K562 (cell line): ENCODE measurements at regions of chr2 and their contacts with region 1.

Region 1: DNA sequence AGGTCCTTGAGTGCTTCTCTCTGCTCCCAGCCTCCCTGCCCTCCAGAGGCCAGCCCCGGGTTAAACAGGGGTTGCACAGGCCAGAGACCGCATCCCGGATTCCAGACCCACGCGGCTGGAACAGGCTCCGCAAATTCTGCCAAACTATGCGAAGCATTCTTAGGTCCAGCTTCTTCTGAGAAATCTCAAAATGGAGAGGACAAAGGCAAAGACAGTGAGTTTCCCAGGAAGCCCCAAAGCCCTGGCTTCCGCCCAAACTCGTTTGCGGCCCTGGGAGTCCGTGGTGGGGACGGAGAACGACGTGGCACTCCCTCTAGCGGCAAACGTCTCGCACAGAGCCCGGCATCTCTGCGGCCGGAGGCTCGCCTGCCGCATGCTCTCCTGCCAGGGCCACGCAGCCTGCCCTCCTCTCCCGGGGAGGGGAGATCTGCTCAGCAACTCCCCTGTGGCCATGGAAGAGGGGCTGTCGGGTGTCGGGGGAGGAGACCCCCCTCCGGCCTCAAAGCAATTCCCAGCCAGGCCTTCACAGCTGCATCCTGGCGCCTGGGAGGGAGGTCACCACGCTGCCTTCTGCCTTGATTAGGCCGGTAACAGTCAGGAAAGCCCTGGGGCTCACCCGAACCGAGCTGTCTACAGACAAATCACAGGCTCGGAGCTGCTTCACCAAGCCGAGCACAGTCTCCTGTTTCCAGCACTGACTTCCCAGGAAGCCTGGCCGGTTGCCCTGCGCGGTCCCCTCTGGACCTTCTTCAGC is 33.4 kb upstream of the KLHL29 start:
- DNase-seq: peak; percentile 66 to 83 (median 70)
- ATAC-seq: peak; percentile 99
- H3K4me3 ChIP-seq: no peak overlapping the region
- H3K27ac ChIP-seq: no peak overlapping the region
- H3K4me1 ChIP-seq: peaks cover 0 to 10% of the 10 kb centered on the region in 2 experiments; a peak in 2 of 5 replicates
- H3K27me3 ChIP-seq: peaks cover 2 to 58% of the 10 kb centered on the region in 2 experiments; a peak in 3 of 5 replicates
- CTCF ChIP-seq: peak; percentile 74 to 85 (median 81)
- EP300 ChIP-seq: no peak
- POLR2A ChIP-seq: no peak
- RAD21 ChIP-seq: peak; percentile 61 to 70

Region 2: DNA sequence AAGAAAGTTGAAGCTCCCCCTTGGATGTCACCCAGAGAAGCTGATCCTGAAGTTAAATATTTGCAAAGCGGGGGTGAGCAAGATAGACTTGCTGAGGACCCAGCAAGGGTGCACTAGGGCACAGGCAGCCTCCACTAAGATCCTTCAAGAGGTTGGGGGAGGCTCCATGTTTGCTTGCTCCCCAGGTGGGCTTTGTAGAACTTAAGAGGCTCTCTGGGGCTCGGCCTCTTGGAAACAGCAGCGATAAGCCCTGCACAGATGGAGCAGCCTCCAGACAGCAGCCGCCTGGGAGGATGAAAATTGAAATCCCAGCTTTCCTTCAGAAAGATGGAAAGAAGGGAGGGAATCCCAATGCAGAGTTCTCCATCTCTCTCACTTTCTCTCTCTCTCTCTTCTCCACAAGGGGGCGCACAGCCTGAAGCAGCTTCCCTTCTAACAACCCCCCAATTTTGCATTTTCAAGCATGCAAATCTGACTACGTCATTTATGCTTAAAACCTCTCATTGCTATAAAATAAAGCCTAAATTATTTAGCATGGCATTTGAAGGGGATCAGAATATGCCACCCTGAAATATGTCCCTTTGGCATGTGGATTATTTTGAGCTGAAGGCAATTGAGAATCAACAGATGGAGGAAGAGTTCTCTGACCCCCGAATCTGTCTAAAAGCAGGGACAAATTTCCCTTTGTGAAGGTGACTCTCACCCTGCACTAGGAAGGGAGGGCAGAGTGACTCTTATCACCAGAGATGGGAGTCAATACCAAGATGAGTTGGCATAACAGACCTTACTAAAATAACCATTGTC is 152.2 kb before region 1 on chr2:
- CTCF ChIA-PET with region 1: no interaction called
- POLR2A ChIA-PET with region 1: no interaction called
- in situ Hi-C with region 1: no loop called
- intact Hi-C with region 1: loop called (anchors 5 kb)
- DNase-seq: peak; percentile 42 to 56 (median 55)
- ATAC-seq: peak; percentile 81
- H3K4me3 ChIP-seq: no peak overlapping the region
- H3K27ac ChIP-seq: no peak overlapping the region
- H3K4me1 ChIP-seq: no peaks in the 10 kb centered on the region
- H3K27me3 ChIP-seq: no peaks in the 10 kb centered on the region
- CTCF ChIP-seq: peak; percentile 48 to 67 (median 65)
- EP300 ChIP-seq: no peak
- POLR2A ChIP-seq: no peak
- RAD21 ChIP-seq: peak in 1 of 2 experiments; percentile 55; a peak in 2 of 4 replicates

Region 3: GRCh38 chr2:23314687-23315086 is 36.9 kb before region 1 on chr2:
- CTCF ChIA-PET with region 1: no interaction called
- POLR2A ChIA-PET with region 1: no interaction called
- in situ Hi-C with region 1: no loop called
- intact Hi-C with region 1: no loop called
- DNase-seq: no peak
- ATAC-seq: no peak
- H3K4me3 ChIP-seq: no peak overlapping the region
- H3K27ac ChIP-seq: no peak overlapping the region
- H3K4me1 ChIP-seq: no peaks in the 10 kb centered on the region
- H3K27me3 ChIP-seq: peaks cover 0 to 4% of the 10 kb centered on the region in 2 experiments; a peak in 3 of 5 replicates
- CTCF ChIP-seq: no peak
- EP300 ChIP-seq: no peak
- POLR2A ChIP-seq: no peak
- RAD21 ChIP-seq: no peak